Dorsolateral prefrontal cortex (tissue), 120 donors: ENCODE measurements at regions of chr17 and their contacts with region 1.

Region 1: DNA sequence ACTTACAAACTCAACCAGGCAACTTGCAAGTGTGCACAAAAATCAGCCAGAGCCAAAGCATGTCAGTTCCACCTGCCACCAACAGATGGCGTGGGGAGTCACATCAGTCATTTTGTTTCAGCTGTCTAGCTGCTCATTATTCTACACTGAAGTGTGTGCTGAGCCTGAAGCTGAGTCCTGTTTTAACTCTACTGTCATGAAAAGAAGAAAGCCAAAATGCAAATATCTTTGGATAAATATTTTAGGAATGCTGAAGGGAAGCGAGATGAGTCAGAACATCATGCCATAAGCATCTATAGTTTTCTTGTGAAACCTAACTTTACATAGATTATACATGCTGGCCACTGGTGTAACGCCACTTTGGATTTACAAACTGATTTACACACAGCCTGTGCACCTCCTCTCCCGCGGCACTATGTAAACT is 172.6 kb downstream of the CDK5R1 start:
- DNase-seq: peak; percentile 71 to 95 (median 86)
- H3K4me3 ChIP-seq: peak overlapping the region in 1 of 59 donors; percentile 22
- H3K27ac ChIP-seq: peak overlapping the region in 56 of 59 donors; percentile 45 to 88 (median 73)
- H3K27me3 ChIP-seq: no peaks in the 10 kb centered on the region
- CTCF ChIP-seq: peak; percentile 88 to 99 (median 96)

Region 2: DNA sequence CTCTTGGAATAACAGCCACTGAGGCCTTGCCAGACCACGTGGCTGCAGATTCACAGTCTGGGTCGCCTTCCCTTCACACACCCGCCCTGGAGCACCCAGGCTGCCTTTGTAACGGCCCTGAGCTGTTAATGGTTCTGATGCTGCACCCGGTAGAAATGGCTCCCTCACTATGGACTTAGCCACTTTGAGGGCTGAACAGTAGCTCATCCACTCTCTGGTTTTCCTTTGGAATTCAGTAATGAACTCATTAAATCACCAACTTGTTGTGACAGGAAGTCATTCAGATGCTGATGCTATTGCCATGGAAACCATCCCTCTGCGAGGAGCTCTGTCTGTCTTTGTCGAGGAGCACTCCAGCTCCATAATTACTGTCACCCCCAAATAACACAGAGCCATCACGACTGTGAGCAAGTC is 113.4 kb before region 1 on chr17:
- intact Hi-C with region 1: loop called in 1 of 2 experiments (anchors 5 kb)
- DNase-seq: peak; percentile 58 to 83 (median 72)
- H3K4me3 ChIP-seq: peak overlapping the region in 33 of 59 donors; percentile 0 to 49 (median 25)
- H3K27ac ChIP-seq: peak overlapping the region in 58 of 59 donors; percentile 30 to 90 (median 76)
- H3K27me3 ChIP-seq: no peaks in the 10 kb centered on the region
- CTCF ChIP-seq: peak in 5 of 56 donors; percentile 14 to 31 (median 23)

Region 3: DNA sequence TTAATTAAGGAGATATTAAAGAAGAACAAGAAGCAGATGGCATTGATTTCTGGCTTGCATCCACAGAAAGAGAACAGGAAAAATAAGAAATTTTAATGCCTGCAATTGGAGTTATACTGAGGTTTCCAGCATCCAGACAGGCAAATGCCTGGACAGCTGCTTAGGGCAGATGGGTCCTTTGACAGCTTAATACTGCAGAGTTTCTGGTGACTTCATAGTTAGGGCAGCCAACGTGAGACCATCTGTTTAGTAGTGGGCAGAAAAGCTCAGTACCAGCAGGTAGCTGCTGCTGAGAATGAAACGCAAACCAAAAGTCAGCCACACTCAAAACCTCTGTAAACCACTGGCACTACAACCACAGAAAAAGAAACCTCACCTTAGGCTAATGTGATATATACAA is 62.8 kb before region 1 on chr17:
- intact Hi-C with region 1: no loop called
- DNase-seq: peak in 4 of 10 donors; percentile 34 to 74 (median 41)
- H3K4me3 ChIP-seq: no peak overlapping the region
- H3K27ac ChIP-seq: peak overlapping the region in 16 of 59 donors; percentile 1 to 78 (median 28)
- H3K27me3 ChIP-seq: no peaks in the 10 kb centered on the region
- CTCF ChIP-seq: no peak

Region 4: DNA sequence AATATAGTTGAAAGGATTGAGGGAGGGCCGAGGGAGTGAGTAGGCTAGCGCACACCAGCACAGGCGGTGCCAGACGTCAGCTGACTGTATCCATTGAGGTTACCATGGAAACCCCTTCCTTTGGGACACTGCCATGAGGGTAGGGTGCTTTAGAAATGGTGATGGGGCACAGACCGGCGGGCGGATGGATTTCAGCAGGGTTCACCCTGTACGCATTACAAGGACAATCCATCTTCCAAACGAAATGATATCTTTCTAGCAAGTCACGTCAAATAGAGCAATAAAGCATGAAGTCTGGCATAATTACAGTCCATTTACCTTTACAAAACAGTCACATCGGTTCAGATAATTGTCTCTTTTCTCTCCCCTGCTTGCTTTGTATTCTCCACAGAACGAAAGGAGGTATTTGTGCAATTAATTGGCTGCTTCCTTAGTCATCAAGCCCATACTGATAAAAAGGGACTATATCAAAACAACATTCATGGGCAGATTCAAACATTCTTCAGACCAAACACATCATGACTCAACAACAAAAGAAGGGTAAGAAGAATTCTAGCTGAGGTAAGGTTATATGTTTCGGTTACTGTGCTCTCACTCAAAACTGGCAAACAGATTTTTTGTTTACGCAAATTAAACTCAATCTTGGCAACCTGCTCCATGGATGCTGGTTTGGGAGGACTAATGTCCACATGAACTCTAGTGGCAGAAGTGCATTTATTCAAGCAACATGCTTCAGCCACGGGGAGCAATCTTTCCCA is 32.0 kb before region 1 on chr17:
- intact Hi-C with region 1: loop called in 1 of 2 experiments (anchors 2 kb)
- DNase-seq: peak; percentile 48 to 91 (median 73)
- H3K4me3 ChIP-seq: peak overlapping the region in 58 of 59 donors; percentile 5 to 64 (median 40)
- H3K27ac ChIP-seq: peak overlapping the region in 58 of 59 donors; percentile 22 to 95 (median 80)
- H3K27me3 ChIP-seq: no peaks in the 10 kb centered on the region
- CTCF ChIP-seq: peak in 19 of 56 donors; percentile 3 to 40 (median 15)

Region 5: DNA sequence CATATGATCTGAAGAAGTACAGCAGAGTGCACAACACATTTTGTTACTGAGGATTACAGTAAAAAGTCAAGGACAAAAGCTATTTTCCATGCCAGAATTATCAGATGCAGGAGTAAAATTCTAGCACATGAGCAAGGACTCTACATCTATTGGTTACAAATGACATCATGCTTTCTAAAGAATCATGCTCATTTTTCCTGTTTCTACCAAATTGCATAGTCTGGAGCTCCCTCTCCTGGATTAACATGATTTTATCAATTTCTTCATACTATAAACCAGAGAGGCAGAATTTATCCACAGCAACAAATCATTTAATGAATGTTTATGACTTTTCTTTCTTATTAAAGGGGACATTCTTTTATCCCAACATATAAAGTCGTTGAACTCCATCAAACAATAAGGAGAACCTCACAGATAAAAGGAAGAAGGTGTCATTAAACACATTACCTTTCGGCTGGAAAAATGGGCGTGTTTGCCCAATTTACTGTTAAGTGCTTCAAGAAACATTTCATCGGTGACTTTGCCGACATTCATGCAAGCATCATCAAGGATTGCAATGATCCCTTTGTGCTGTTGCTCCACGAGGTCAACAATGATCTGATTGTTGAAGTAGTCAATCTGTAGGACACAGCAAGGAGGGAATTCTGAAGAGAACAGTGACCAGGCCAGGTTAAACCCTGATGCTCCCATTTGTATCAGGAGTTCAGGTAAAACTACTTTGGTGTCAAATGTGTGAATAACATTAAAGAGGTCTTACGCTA is 95.8 kb after region 1 on chr17:
- intact Hi-C with region 1: loop called (anchors 2 to 5 kb)
- DNase-seq: peak in 2 of 10 donors; percentile 23 to 35
- H3K4me3 ChIP-seq: peak overlapping the region in 6 of 59 donors; percentile 4 to 31 (median 14)
- H3K27ac ChIP-seq: peak overlapping the region; percentile 44 to 95 (median 85)
- H3K27me3 ChIP-seq: no peaks in the 10 kb centered on the region
- CTCF ChIP-seq: peak; percentile 58 to 94 (median 80)

Region 6: GRCh38 chr17:32877164-32877764 is 217.8 kb after region 1 on chr17:
- intact Hi-C with region 1: loop called in 1 of 2 experiments (anchors 10 kb)
- DNase-seq: peak; percentile 61 to 92 (median 84)
- H3K4me3 ChIP-seq: peak overlapping the region in 58 of 59 donors; percentile 51 to 91 (median 82)
- H3K27ac ChIP-seq: peak overlapping the region in 52 of 59 donors; percentile 29 to 97 (median 87)
- H3K27me3 ChIP-seq: no peaks in the 10 kb centered on the region
- CTCF ChIP-seq: peak; percentile 34 to 95 (median 82)